ENCODE measurements at regions of chr1 and their contacts with region 1.

Region 1: GRCh38 chr1:198620951-198621824 is 17.7 kb upstream of the PTPRC start:
- DNase-seq: peak; percentile 72 to 95 (median 92)
- H3K4me3 ChIP-seq: peak overlapping the region in 3 of 7 experiments; percentile 1 to 43 (median 33)
- H3K27ac ChIP-seq: peak overlapping the region; percentile 12 to 59
- H3K4me1 ChIP-seq: peaks cover 30 to 43% (median 38%) of the 10 kb centered on the region in 4 experiments
- H3K27me3 ChIP-seq: no peaks in the 10 kb centered on the region

Region 2: GRCh38 chr1:198606020-198606438 is 15.2 kb before region 1 on chr1:
- CTCF ChIA-PET with region 1: interaction called, 34 read pairs
- POLR2A ChIA-PET with region 1: interaction called, 3 read pairs
- DNase-seq: no peak
- H3K4me3 ChIP-seq: peak overlapping the region in 3 of 7 experiments; percentile 12 to 31 (median 16)
- H3K27ac ChIP-seq: peak overlapping the region in 1 of 2 experiments; percentile 59
- H3K4me1 ChIP-seq: peaks cover 19 to 56% (median 38%) of the 10 kb centered on the region in 4 experiments
- H3K27me3 ChIP-seq: no peaks in the 10 kb centered on the region

Region 3: DNA sequence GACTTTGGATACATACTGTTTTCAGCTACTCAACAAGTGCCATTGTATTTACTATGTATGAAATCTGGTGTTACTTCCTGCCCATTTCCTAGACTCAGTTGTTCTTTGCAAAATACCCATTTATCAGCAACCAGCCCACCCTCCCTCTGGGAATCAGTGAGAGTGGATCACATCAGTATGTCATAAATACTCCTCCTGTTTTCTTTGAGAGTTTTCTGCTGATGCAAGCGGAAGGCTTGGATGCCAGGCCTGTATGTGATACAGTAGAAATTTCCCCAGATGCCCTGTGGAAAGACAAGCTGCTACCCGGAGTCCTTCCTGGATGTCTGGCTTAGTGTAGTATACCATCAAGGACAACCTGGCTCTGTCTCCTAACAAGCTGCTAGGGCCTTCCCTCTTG is 15.2 kb after region 1 on chr1:
- CTCF ChIA-PET with region 1: interaction called, 14 read pairs
- POLR2A ChIA-PET with region 1: interaction called, 4 read pairs
- DNase-seq: no peak
- H3K4me3 ChIP-seq: no peak overlapping the region
- H3K27ac ChIP-seq: no peak overlapping the region
- H3K4me1 ChIP-seq: peaks cover 14 to 46% (median 29%) of the 10 kb centered on the region in 4 experiments
- H3K27me3 ChIP-seq: no peaks in the 10 kb centered on the region

Region 4: GRCh38 chr1:198699167-198700015 is 78.2 kb after region 1 on chr1:
- CTCF ChIA-PET with region 1: no interaction called
- POLR2A ChIA-PET with region 1: no interaction called
- DNase-seq: peak; percentile 29 to 54 (median 48)
- H3K4me3 ChIP-seq: no peak overlapping the region
- H3K27ac ChIP-seq: no peak overlapping the region
- H3K4me1 ChIP-seq: no peaks in the 10 kb centered on the region
- H3K27me3 ChIP-seq: no peaks in the 10 kb centered on the region

Measured in common myeloid progenitor, CD34-positive (primary cell).